Sciatic nerve (tissue), 2 donors: ENCODE measurements at regions of chr14 and their contacts with region 1.

Region 1: GRCh38 chr14:56549721-56550120 is 29.9 kb upstream of the TMEM260 start:
- DNase-seq: no peak
- ATAC-seq: no peak

Region 2: GRCh38 chr14:56390859-56391258 is 158.9 kb before region 1 on chr14:
- intact Hi-C with region 1: no loop called
- DNase-seq: no peak
- ATAC-seq: no peak

Region 3: GRCh38 chr14:56501909-56502530 is 47.7 kb before region 1 on chr14:
- intact Hi-C with region 1: loop called (anchors 1 kb)
- DNase-seq: no peak
- ATAC-seq: no peak